ENCODE measurements at regions of chr3 and their contacts with region 1.

Region 1: GRCh38 chr3:134473868-134474546 is 11.8 kb downstream of the ANAPC13 start:
- DNase-seq: peak in 1 of 2 donors; percentile 45
- ATAC-seq: peak; percentile 44 to 70 (median 46)
- H3K4me3 ChIP-seq: no peak overlapping the region
- H3K27ac ChIP-seq: no peak overlapping the region
- H3K4me1 ChIP-seq: peaks cover 18% of the 10 kb centered on the region
- H3K27me3 ChIP-seq: no peaks in the 10 kb centered on the region
- CTCF ChIP-seq: peak; percentile 88

Region 2: DNA sequence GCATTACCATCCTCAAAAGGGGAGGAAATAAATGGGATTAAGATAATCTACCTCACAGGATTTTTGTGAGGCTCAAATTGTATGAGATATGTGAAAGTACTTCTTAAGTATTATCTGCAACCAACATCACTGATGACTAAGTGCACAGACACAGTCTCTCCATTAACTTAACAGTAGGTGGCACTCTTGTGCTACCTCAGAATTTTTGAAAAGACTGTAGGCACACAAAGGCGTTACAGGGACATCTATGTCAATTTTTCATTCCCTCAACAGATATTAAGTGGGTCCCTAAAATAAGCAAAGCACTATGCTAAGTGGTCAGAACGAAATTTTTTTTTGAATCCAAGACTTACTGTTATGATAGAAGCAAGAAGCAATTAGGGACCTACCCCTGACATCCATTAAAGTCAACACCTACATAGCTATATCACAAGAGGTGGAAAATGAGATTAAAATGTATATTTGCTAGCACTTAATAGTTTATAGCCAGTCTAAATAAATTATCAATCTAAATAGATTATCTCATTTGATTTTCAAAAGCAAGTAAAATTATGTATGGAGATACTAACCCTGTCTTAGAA is 276.2 kb before region 1 on chr3:
- intact Hi-C with region 1: loop called in 1 of 2 experiments (anchors 5 kb)
- DNase-seq: no peak
- ATAC-seq: peak; percentile 71 to 92 (median 88)
- H3K4me3 ChIP-seq: no peak overlapping the region
- H3K27ac ChIP-seq: no peak overlapping the region
- H3K4me1 ChIP-seq: no peaks in the 10 kb centered on the region
- H3K27me3 ChIP-seq: no peaks in the 10 kb centered on the region
- CTCF ChIP-seq: peak; percentile 75

Region 3: GRCh38 chr3:134308350-134308891 is 165.6 kb before region 1 on chr3:
- intact Hi-C with region 1: loop called (anchors 1 to 2 kb)
- DNase-seq: peak; percentile 85 to 87
- ATAC-seq: peak; percentile 65 to 79 (median 74)
- H3K4me3 ChIP-seq: peak overlapping the region; percentile 29
- H3K27ac ChIP-seq: peak overlapping the region; percentile 72
- H3K4me1 ChIP-seq: peaks cover 31% of the 10 kb centered on the region
- H3K27me3 ChIP-seq: no peaks in the 10 kb centered on the region
- CTCF ChIP-seq: peak; percentile 100

Region 4: GRCh38 chr3:134373994-134374790 is 99.8 kb before region 1 on chr3 and contains the start of gene AMOTL2:
- intact Hi-C with region 1: loop called (anchors 5 kb)
- DNase-seq: peak; percentile 90 to 96
- ATAC-seq: peak; percentile 85 to 92 (median 90)
- H3K4me3 ChIP-seq: peak within 1 kb of the TSS; percentile 86
- H3K27ac ChIP-seq: peak within 1 kb of the TSS; percentile 93
- H3K4me1 ChIP-seq: peaks cover 50% of the 10 kb centered on the region
- H3K27me3 ChIP-seq: no peaks in the 10 kb centered on the region
- CTCF ChIP-seq: no peak
- total RNA-seq, gene AMOTL2: 16.5 to 36.6 (median 29.6) TPM

Measured in psoas muscle (tissue), 8 donors.